ENCODE measurements at regions of chr9 and their contacts with region 1.

Region 1: GRCh38 chr9:123033864-123034601 is 566 bp downstream of the GPR21 start:
- DNase-seq: no peak
- H3K4me3 ChIP-seq: no peak overlapping the region
- H3K27ac ChIP-seq: no peak overlapping the region
- H3K4me1 ChIP-seq: peaks cover 10% of the 10 kb centered on the region
- H3K27me3 ChIP-seq: no peaks in the 10 kb centered on the region
- CTCF ChIP-seq: no peak
- POLR2A ChIP-seq: no peak

Region 2: DNA sequence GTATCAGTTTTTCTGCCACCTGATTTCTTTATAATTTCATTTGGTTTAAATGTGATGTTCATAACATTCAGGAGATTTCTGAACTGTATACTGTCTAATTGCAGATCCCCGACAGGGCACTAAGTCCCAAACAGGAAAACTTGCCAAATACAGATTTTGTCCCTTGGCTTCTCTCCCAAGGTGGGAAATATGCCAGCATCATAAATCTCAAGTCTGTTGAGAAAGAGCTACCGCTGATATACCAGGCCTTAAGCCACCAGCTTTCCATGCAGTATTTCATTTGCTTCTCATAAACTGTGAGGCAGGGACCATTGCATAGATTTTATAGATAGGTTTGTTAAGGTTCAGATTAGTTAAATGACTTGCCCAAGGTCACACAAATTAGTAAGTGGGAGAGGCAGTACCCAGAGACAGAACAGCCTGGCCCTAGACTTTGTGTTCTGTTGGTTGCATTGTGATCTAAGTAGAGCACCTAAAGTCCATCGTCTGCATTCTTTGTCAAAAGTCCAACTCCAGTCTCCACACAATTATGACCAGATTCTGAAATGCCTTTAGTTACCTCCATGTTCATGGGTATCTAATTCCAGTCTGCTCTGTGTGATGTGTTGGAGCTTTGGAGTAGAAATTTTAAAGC is 15.7 kb after region 1 on chr9:
- CTCF ChIA-PET with region 1: interaction called, 4 read pairs
- POLR2A ChIA-PET with region 1: no interaction called
- dilution Hi-C with region 1: no loop called
- intact Hi-C with region 1: loop called (anchors 1 kb)
- DNase-seq: peak; percentile 97
- H3K4me3 ChIP-seq: no peak overlapping the region
- H3K27ac ChIP-seq: no peak overlapping the region
- H3K4me1 ChIP-seq: peaks cover 21% of the 10 kb centered on the region
- H3K27me3 ChIP-seq: no peaks in the 10 kb centered on the region
- CTCF ChIP-seq: no peak
- POLR2A ChIP-seq: no peak

Measured in endothelial cell of umbilical vein (primary cell).